MCF 10A (cell line): ENCODE measurements at regions of chr5 and their contacts with region 1.

Region 1: GRCh38 chr5:123036391-123037103 is at the start of gene PPIC:
- DNase-seq: peak; percentile 88
- H3K4me3 Mint-ChIP-seq: peak within 1 kb of the TSS; percentile 80
- H3K27ac Mint-ChIP-seq: peak within 1 kb of the TSS; percentile 86
- H3K4me1 Mint-ChIP-seq: peaks cover 38% of the 10 kb centered on the region
- H3K27me3 Mint-ChIP-seq: no peaks in the 10 kb centered on the region
- CTCF ChIP-seq: no peak
- total RNA-seq, gene PPIC: 45.3 and 65.0 TPM in 2 replicates

Region 2: GRCh38 chr5:122907238-122907637 is 129.3 kb before region 1 on chr5:
- CTCF ChIA-PET with region 1: no interaction called
- POLR2A ChIA-PET with region 1: no interaction called
- intact Hi-C with region 1: loop called (anchors 2 kb)
- DNase-seq: peak; percentile 66
- H3K4me3 Mint-ChIP-seq: peak overlapping the region; percentile 44
- H3K27ac Mint-ChIP-seq: peak overlapping the region; percentile 76
- H3K4me1 Mint-ChIP-seq: peaks cover 41% of the 10 kb centered on the region
- H3K27me3 Mint-ChIP-seq: no peaks in the 10 kb centered on the region
- CTCF ChIP-seq: no peak

Region 3: DNA sequence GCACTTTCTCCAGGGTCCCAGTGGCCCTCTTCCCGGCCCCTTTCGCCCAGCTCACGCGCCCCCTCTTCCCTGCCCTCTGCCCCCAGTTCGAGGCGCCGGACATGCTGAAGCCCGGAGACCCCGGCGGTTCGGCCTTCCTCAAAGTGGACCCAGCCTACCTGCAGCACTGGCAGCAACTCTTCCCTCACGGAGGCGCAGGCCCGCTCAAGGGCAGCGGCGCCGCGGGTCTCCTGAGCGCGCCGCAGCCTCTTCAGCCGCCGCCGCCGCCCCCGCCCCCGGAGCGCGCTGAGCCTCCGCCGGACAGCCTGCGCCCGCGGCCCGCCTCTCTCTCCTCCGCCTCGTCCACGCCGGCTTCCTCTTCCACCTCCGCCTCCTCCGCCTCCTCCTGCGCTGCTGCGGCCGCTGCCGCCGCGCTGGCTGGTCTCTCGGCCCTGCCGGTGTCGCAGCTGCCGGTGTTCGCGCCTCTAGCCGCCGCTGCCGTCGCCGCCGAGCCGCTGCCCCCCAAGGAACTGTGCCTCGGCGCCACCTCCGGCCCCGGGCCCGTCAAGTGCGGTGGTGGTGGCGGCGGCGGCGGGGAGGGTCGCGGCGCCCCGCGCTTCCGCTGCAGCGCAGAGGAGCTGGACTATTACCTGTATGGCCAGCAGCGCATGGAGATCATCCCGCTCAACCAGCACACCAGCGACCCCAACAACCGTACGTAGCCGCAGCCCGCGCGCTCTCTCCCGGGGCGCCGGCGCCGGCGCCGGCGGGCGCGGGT is 53.5 kb after region 1 on chr5:
- CTCF ChIA-PET with region 1: interaction called, 3 read pairs
- POLR2A ChIA-PET with region 1: interaction called, 4 read pairs
- intact Hi-C with region 1: loop called (anchors 5 kb)
- DNase-seq: peak; percentile 53
- H3K4me3 Mint-ChIP-seq: peak overlapping the region; percentile 72
- H3K27ac Mint-ChIP-seq: no peak overlapping the region
- H3K4me1 Mint-ChIP-seq: peaks cover 7% of the 10 kb centered on the region
- H3K27me3 Mint-ChIP-seq: peaks cover 86% of the 10 kb centered on the region
- CTCF ChIP-seq: no peak

Region 4: GRCh38 chr5:123157791-123158581 is 121.4 kb after region 1 on chr5:
- CTCF ChIA-PET with region 1: no interaction called
- POLR2A ChIA-PET with region 1: interaction called, 12 read pairs
- intact Hi-C with region 1: loop called (anchors 2 kb)
- DNase-seq: peak; percentile 82
- H3K4me3 Mint-ChIP-seq: peak overlapping the region; percentile 47
- H3K27ac Mint-ChIP-seq: peak overlapping the region; percentile 68
- H3K4me1 Mint-ChIP-seq: peaks cover 20% of the 10 kb centered on the region
- H3K27me3 Mint-ChIP-seq: no peaks in the 10 kb centered on the region
- CTCF ChIP-seq: no peak

Region 5: DNA sequence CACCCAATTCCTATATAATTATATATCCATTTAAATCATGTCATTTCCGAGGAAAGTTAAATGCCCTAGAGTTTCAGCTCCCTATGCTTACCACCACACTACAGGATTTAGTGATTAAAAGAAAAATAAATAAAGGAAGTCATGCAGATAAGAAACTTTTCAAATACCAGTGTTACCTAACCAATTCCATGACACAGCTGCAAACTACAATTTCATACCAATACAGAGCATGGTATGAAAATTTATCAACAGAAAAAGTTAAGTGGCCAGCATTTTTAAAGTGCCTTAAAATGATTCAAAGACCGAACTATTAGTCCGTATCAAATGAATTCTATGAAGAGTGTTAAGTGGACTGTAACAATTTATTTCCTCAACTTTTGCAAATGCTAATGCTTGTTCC is 350.8 kb after region 1 on chr5:
- CTCF ChIA-PET with region 1: no interaction called
- POLR2A ChIA-PET with region 1: no interaction called
- intact Hi-C with region 1: no loop called
- DNase-seq: no peak
- H3K4me3 Mint-ChIP-seq: no peak overlapping the region
- H3K27ac Mint-ChIP-seq: no peak overlapping the region
- H3K4me1 Mint-ChIP-seq: no peaks in the 10 kb centered on the region
- H3K27me3 Mint-ChIP-seq: no peaks in the 10 kb centered on the region
- CTCF ChIP-seq: no peak